Breast epithelium (tissue), 4 donors: ENCODE measurements at regions of chr11 and their contacts with region 1.

Region 1: GRCh38 chr11:47791774-47792430 is 24.8 kb upstream of the FNBP4 start:
- DNase-seq: no peak
- H3K4me3 ChIP-seq: no peak overlapping the region
- H3K27ac ChIP-seq: no peak overlapping the region
- H3K4me1 ChIP-seq: no peaks in the 10 kb centered on the region
- H3K27me3 ChIP-seq: no peaks in the 10 kb centered on the region
- CTCF ChIP-seq: no peak
- POLR2A ChIP-seq: no peak

Region 2: DNA sequence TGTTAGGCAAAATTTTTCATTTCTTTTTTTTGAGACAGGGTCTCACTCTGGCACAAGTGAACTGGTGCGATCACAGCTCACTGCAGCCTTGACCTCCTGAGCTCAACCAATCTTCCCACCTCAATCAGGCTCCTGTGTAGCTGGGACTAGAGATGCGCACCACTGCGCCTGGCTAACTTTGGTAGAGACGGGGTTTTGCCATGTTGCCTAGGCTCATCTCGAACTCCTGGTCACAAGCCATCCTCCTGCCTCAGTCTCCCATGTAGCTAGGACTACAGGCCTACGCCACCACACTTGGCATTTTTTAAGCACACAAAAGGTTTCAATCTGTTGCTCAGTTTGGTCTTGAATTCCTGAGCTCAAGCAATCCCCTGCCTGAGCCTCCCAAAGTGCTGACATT is 33.8 kb before region 1 on chr11:
- intact Hi-C with region 1: no loop called
- DNase-seq: no peak
- H3K4me3 ChIP-seq: no peak overlapping the region
- H3K27ac ChIP-seq: no peak overlapping the region
- H3K4me1 ChIP-seq: no peaks in the 10 kb centered on the region
- H3K27me3 ChIP-seq: no peaks in the 10 kb centered on the region
- CTCF ChIP-seq: no peak
- POLR2A ChIP-seq: no peak

Region 3: DNA sequence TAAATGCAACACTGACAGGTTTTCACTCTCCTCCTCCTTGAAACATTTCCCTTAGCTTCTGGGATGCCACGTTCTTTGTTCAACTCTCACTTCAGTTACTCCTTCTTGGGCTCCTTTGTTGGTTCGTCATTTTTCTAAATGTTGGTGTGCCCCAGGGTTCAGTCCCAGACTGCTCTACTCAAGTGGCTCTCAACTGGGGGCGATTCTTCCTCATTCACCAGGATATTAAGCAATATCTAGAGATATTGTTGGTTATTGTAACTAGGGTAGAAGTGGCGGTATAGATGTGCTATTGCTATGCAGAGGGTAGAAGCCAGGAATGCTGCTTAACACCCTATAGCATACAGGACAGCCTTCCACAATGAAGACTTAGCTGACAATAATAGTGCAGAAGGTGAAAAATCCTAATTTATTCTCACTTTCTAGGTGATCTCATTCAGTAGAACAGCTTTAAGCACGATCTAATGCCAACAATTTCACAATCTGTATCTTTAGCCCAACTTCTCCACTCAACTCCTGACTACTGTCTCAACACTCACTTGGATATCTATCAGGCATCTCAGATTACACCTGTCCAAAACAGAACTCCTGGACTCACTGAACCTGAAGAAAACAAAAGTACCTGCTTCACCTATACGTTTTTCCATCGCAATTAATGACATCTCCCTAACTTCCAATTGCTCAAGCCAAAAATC is 51.6 kb after region 1 on chr11:
- intact Hi-C with region 1: loop called (anchors 2 kb)
- DNase-seq: no peak
- H3K4me3 ChIP-seq: no peak overlapping the region
- H3K27ac ChIP-seq: no peak overlapping the region
- H3K4me1 ChIP-seq: no peaks in the 10 kb centered on the region
- H3K27me3 ChIP-seq: no peaks in the 10 kb centered on the region
- CTCF ChIP-seq: no peak
- POLR2A ChIP-seq: no peak

Region 4: DNA sequence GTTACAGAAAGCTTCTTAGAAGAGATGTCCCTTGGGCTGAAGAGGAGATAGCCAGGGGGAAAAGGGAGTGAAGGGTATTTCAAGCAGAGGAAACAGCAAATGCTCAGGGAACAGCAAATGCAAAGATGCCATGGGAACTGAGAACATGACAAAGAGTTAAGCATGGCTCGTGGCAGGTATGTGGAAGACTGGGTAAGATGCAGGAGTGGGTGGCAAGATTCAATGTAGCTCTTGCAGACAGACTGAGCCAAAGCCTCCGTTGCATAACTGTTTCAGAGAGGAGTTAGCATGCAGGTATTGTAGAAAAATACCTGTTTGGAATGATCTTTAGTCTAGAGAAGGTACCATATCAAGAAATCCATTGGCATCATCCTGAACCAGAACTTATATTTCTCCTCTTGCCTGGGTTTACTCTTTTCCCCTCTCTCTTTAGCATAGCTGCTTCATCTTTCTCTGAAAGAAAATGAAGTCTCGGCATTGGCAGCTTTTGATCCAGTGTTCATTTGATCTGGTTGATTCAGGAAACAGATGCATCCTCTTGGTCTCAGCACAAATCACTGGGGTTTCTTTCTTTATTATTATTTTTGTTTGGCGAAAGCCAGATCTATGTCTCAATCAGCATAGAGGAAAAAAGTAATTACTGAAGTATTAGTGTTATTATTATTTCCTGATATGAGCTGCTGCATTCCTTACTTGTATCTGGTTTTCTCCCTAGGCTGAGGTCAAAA is 98.0 kb after region 1 on chr11:
- intact Hi-C with region 1: no loop called
- DNase-seq: no peak
- H3K4me3 ChIP-seq: no peak overlapping the region
- H3K27ac ChIP-seq: no peak overlapping the region
- H3K4me1 ChIP-seq: peaks cover 0 to 4% of the 10 kb centered on the region in 2 donors
- H3K27me3 ChIP-seq: no peaks in the 10 kb centered on the region
- CTCF ChIP-seq: no peak
- POLR2A ChIP-seq: no peak